Activated T-helper 1 cell treated with anti-CD3 and anti-CD28 coated beads, Interleukin-12 subunit alpha, Interleukin-12 subunit beta, Interleukin-2, Interleukin-4 antibody, amounts not matched to agents 30 ng/mL and 10 ng/mL and 1 ng/mL, durations not matched to agents 14 hours and 24 hours and 36 hours (primary cell): ENCODE measurements at regions of chr3 and their contacts with region 1.

Region 1: GRCh38 chr3:183447206-183448001 is 19.0 kb upstream of the MCF2L2 start:
- DNase-seq: peak; percentile 75
- H3K4me3 Mint-ChIP-seq: peak overlapping the region; percentile 94
- H3K27ac Mint-ChIP-seq: peak overlapping the region; percentile 86
- H3K4me1 Mint-ChIP-seq: peaks cover 22% of the 10 kb centered on the region
- H3K27me3 Mint-ChIP-seq: peaks cover 8% of the 10 kb centered on the region

Region 2: DNA sequence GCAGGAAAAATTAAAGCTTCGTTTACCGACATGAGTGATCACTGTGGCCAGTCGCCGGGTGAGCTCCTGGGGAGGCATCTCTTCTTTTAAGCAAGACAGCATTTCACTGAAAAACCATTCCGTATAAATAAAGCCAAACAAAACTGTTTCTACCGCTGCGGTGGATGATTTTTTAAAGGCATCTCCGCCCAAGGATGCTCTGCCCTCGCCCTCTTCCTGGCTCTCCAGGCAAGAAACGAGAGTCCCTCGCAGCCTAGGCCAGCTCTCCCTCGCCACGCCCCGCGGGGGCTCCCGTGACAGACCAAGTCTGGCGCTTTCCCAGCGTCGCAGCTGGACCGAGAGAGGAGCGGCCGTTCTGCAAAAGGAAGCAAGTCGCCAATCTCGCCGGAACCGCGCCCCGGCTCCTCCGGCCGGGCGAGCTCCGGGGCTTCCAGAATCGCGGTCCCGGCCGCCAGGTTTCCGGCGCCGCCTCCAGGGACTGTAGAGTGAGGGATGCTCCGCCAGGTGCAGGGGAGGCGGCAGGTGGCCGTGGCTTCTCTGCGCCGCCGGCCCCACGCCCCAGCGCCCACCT is 19.4 kb before region 1 on chr3:
- intact Hi-C with region 1: loop called (anchors 1 kb)
- DNase-seq: peak; percentile 14
- H3K4me3 Mint-ChIP-seq: peak overlapping the region; percentile 82
- H3K27ac Mint-ChIP-seq: peak overlapping the region; percentile 42
- H3K4me1 Mint-ChIP-seq: peaks cover 33% of the 10 kb centered on the region
- H3K27me3 Mint-ChIP-seq: peaks cover 9% of the 10 kb centered on the region

Region 3: GRCh38 chr3:183697610-183698317 is 250.4 kb after region 1 on chr3 and contains the start of gene YEATS2:
- intact Hi-C with region 1: loop called (anchors 5 kb)
- DNase-seq: peak; percentile 65
- H3K4me3 Mint-ChIP-seq: peak within 1 kb of the TSS; percentile 88
- H3K27ac Mint-ChIP-seq: peak within 1 kb of the TSS; percentile 94
- H3K4me1 Mint-ChIP-seq: peaks cover 37% of the 10 kb centered on the region
- H3K27me3 Mint-ChIP-seq: no peaks in the 10 kb centered on the region
- total RNA-seq, gene YEATS2: 54.2 and 57.4 TPM in 2 replicates

Region 4: DNA sequence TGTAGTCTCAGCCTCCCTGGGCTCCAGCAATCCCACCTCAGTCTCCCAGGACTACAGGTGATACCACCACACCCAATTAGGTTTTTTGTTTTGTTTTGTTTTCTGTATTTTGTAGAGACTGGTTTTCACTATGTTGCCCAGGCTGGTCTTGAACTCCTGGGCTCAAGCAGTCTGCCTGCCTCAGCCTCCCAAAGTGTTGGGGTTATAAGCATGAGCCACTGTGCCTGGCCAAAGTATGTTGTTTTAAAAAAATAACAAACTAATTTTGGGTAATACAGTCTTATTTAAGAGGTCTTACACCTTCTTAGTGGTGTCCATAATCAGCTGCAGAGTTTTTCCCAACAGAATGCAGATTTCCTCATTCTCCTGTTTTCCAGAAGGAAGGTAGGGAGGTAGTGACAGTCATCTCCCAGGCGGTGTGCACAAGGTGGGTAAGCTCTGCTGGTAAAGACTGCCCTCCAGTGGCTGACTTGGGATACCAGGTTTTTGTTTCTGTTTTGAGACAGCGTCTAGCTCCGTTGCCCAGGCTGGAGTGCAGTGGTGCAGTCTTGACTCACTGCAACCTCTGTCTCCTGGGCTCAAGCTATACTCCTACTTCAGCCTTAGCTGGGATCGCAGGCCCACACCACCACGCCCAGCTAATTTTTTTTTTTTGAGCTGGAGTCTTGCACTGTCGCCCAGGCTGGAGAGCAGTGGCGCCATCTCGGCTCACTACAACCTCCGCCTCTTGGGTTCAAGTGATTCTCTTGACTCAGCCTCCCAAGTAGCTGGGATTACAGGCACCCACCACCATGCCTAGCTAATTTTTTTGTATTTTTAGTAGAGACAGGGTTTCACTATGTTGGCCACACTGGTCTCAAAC is 319.6 kb after region 1 on chr3:
- intact Hi-C with region 1: loop called (anchors 1 kb)
- DNase-seq: peak; percentile 63
- H3K4me3 Mint-ChIP-seq: no peak overlapping the region
- H3K27ac Mint-ChIP-seq: no peak overlapping the region
- H3K4me1 Mint-ChIP-seq: peaks cover 7% of the 10 kb centered on the region
- H3K27me3 Mint-ChIP-seq: no peaks in the 10 kb centered on the region